ENCODE measurements at regions of chr19 and their contacts with region 1.

Region 1: DNA sequence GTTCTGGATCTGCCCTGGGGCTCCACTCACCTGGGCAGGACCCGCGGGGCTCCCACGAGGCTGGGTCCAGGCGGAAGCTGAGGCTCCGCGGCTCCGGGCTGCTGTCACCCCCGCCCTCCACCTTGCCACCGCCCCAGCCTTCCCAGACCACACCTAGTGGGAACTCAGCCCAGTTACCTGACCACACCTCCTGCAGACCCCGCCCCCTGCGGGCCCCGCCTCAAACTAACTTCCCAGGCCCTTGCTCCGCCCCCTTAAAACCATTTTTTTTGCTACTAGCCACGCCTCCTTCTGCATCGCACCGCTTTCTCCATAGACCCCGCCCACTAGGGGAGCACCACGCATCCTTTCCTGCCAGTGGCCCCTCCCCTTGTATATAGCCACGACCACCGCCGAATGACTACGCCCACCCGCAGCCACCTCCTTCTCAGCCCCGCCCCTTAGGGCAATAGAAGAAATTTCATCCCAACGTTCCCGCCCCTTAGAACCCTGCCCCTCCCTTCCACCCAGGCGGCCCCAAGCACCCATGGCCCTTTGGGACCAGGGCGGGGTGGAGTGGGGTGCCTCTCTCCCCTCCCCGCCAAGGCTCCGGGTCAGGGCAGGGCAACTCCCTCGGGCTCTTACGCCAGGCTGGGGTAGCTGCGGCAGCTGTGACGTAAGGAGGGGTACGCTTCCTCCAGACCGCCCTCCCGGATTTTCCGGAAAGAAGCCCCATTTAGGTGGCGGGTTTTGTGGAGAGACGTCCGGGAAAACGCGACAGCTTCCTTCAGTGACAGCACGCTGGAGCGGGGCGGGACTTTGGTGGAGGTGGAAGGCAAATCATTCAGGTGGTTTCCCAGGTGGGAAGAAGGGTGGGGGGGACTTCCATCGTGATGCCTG is at the start of gene SH2D3A:
- DNase-seq: peak; percentile 98
- ATAC-seq: peak; percentile 77
- H3K4me3 Mint-ChIP-seq: peak within 1 kb of the TSS; percentile 91
- H3K27ac Mint-ChIP-seq: peak within 1 kb of the TSS; percentile 93
- H3K4me1 Mint-ChIP-seq: peaks cover 38% of the 10 kb centered on the region
- H3K27me3 Mint-ChIP-seq: no peaks in the 10 kb centered on the region
- total RNA-seq, gene SH2D3A: 13.8 to 22.3 TPM

Region 2: GRCh38 chr19:6779206-6779605 is 11.6 kb after region 1 on chr19:
- CTCF ChIA-PET with region 1: interaction called, 10 read pairs
- DNase-seq: no peak
- ATAC-seq: no peak
- H3K4me3 Mint-ChIP-seq: no peak overlapping the region
- H3K27ac Mint-ChIP-seq: no peak overlapping the region
- H3K4me1 Mint-ChIP-seq: peaks cover 52% of the 10 kb centered on the region
- H3K27me3 Mint-ChIP-seq: no peaks in the 10 kb centered on the region

Region 3: DNA sequence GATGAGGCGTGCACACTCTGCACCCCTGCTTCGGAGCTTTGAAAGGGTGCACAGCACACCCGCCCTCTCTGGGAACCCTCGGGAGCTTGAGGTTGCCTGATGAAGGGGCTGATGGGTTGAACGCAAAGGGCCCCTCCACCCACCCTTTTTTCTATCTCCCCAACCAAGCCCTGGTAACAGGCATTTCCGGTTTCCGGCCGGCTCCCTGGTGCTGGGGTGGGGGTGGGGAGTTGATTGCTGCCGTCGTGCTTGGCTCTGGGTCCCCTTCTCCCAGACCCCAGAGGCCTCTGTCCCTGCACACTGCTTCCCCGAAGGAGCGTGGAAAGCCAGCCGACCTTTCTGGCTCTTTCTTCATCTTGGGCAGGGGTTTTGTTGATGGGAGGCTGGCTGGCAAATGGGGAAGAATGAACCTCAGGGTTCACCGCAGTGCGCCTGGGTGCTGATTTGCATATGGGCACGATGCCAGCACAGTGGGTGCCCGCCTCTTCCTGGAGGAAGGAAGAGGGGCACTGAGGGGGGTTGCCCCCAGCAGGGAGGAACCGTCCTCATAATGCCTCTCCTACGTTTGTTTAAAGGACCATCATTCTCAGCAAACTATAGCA is 34.0 kb after region 1 on chr19:
- CTCF ChIA-PET with region 1: interaction called, 46 read pairs
- DNase-seq: peak; percentile 90
- ATAC-seq: peak; percentile 74
- H3K4me3 Mint-ChIP-seq: peak overlapping the region; percentile 78
- H3K27ac Mint-ChIP-seq: peak overlapping the region; percentile 93
- H3K4me1 Mint-ChIP-seq: peaks cover 54% of the 10 kb centered on the region
- H3K27me3 Mint-ChIP-seq: no peaks in the 10 kb centered on the region

Measured in activated CD8-positive, alpha-beta memory T cell treated with anti-CD3 and anti-CD28 coated beads, Interleukin-2, amount 10 ng/mL, durations not matched to agents 7 days and 5 days (primary cell).